ENCODE measurements at regions of chr11 and their contacts with region 1.

Region 1: GRCh38 chr11:77047007-77047927 is 13.1 kb downstream of the B3GNT6 start:
- DNase-seq: peak; percentile 33 to 94 (median 90)
- ATAC-seq: peak; percentile 89
- H3K4me3 Mint-ChIP-seq: peak overlapping the region; percentile 62 to 86 (median 74)
- H3K27ac Mint-ChIP-seq: peak overlapping the region; percentile 8 to 93 (median 72)
- H3K4me1 Mint-ChIP-seq: peaks cover 8 to 14% (median 10%) of the 10 kb centered on the region in 4 donors
- H3K27me3 Mint-ChIP-seq: peaks cover 3 to 26% (median 9%) of the 10 kb centered on the region in 5 donors

Region 2: DNA sequence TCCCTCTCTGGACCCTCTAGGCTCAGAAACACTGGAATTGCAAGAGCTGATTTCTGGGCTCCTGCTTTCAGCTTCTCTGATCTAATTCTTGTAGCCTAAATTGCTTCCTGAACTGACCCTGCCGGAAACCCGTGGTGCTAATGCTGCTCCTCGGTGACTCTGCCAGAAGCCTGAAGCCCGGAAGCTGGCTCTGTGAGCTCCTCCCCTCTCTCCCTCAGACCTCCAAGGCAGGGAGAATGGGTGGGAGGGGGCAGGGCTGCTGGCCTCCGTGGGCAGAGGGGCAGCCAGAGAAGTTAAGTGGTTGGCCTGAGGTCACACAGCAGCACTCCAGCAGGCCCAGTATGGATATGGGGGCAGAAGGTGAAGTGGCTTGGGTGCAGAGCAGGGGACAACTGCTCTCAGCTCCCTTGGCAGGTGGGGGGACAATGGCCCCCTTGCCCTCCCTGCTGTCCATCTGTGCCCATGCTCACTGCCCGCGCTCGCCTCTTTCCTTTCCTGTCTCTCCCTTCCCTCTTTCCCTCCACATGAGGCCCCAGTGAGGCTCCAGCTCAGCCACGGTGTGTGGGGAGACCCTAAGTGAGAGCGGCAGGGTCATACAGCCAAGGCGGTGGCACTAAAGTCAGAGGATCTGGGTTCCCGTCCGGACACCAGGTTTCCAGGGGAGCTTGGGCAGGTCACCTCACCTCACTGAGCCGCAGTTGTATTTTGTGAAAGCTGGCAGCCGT is 35.7 kb after region 1 on chr11:
- POLR2A ChIA-PET with region 1: interaction called, 13 read pairs
- DNase-seq: peak in 9 of 10 donors; percentile 18 to 79 (median 48)
- ATAC-seq: peak; percentile 94 to 95
- H3K4me3 Mint-ChIP-seq: peak overlapping the region; percentile 73 to 89 (median 86)
- H3K27ac Mint-ChIP-seq: peak overlapping the region; percentile 96 to 99 (median 98)
- H3K4me1 Mint-ChIP-seq: peaks cover 16 to 42% (median 25%) of the 10 kb centered on the region in 4 donors
- H3K27me3 Mint-ChIP-seq: no peaks in the 10 kb centered on the region

Region 3: DNA sequence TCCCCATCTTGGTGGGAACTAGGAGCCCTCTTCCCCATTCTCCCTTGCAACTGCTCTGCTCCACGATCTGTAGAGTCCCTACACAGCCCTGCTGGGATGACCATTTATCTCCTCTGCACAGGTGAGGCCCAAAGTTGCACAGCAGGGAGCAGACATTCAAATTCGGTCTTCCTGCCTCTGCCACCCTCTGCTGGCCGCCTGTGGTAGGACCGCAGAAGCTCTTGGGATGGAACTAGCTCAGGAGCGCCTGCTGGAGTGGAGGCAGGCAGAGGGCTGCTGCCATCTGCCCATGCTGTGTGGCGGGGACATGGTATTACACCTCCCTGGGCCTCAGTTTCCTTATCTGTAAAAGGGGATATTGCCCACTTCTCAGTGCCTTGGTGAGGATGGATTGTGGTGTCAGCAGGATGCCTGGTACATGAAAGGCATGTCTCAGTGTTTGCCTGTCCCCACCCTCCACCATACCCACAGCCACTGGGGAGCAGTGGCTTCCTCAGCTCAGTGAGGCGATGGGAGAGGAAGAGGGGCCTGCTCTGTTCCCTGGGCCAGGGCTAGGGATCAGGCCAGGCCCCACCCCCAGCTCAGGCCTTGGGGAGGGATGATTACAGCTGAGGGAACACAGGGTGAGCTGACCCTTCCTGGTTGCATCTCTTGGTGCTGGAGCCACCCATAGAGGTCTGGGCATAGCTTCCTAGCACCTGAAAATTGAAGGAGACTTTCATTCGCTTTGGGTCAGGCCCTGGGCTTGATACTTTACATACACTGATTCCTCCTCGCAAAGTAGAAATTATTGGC is 44.1 kb after region 1 on chr11:
- POLR2A ChIA-PET with region 1: interaction called, 15 read pairs
- DNase-seq: peak; percentile 63 to 90 (median 73)
- ATAC-seq: peak; percentile 98 to 100
- H3K4me3 Mint-ChIP-seq: no peak overlapping the region
- H3K27ac Mint-ChIP-seq: no peak overlapping the region
- H3K4me1 Mint-ChIP-seq: peaks cover 2 to 7% (median 3%) of the 10 kb centered on the region in 4 donors
- H3K27me3 Mint-ChIP-seq: no peaks in the 10 kb centered on the region

Region 4: DNA sequence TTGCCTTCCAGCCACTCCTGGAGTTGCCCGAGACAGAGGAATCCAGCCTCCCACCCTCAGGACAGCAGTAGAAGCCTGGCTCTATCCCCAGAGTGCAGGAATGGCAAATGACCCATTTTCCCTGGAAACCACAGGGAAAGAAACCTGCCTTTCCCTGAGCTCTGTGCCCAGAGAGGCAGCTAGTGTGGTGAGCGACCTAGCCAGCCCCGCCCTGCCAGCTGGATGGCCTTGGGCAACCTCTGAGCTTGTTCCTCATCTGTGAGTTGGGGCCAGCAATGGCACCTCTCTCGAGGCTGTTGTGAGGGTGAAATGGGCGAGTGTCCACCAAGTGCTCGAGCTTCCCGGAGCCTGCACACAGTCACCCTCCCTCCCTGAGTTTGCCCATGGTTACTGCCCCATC is 59.1 kb after region 1 on chr11:
- POLR2A ChIA-PET with region 1: no interaction called
- DNase-seq: no peak
- ATAC-seq: no peak
- H3K4me3 Mint-ChIP-seq: no peak overlapping the region
- H3K27ac Mint-ChIP-seq: no peak overlapping the region
- H3K4me1 Mint-ChIP-seq: no peaks in the 10 kb centered on the region
- H3K27me3 Mint-ChIP-seq: no peaks in the 10 kb centered on the region

Region 5: GRCh38 chr11:77130763-77131513 is 83.7 kb after region 1 on chr11:
- POLR2A ChIA-PET with region 1: no interaction called
- DNase-seq: no peak
- ATAC-seq: no peak
- H3K4me3 Mint-ChIP-seq: no peak overlapping the region
- H3K27ac Mint-ChIP-seq: peak overlapping the region in 2 of 10 donors; percentile 62 to 69
- H3K4me1 Mint-ChIP-seq: peaks cover 8 to 22% (median 13%) of the 10 kb centered on the region in 4 donors
- H3K27me3 Mint-ChIP-seq: peaks cover 0 to 9% (median 3%) of the 10 kb centered on the region in 5 donors

Measured in naive thymus-derived CD8-positive, alpha-beta T cell (primary cell).